Ascending aorta (tissue), 2 donors: ENCODE measurements at regions of chr1 and their contacts with region 1.

Region 1: GRCh38 chr1:31715087-31715872 is 11.5 kb upstream of the COL16A1 start:
- DNase-seq: peak; percentile 80 to 97
- H3K4me3 ChIP-seq: peak overlapping the region; percentile 46 to 64
- H3K27ac ChIP-seq: peak overlapping the region; percentile 96
- H3K4me1 ChIP-seq: peaks cover 17 to 39% of the 10 kb centered on the region in 2 donors
- H3K27me3 ChIP-seq: no peaks in the 10 kb centered on the region
- CTCF ChIP-seq: peak; percentile 85 to 95 (median 90)

Region 2: DNA sequence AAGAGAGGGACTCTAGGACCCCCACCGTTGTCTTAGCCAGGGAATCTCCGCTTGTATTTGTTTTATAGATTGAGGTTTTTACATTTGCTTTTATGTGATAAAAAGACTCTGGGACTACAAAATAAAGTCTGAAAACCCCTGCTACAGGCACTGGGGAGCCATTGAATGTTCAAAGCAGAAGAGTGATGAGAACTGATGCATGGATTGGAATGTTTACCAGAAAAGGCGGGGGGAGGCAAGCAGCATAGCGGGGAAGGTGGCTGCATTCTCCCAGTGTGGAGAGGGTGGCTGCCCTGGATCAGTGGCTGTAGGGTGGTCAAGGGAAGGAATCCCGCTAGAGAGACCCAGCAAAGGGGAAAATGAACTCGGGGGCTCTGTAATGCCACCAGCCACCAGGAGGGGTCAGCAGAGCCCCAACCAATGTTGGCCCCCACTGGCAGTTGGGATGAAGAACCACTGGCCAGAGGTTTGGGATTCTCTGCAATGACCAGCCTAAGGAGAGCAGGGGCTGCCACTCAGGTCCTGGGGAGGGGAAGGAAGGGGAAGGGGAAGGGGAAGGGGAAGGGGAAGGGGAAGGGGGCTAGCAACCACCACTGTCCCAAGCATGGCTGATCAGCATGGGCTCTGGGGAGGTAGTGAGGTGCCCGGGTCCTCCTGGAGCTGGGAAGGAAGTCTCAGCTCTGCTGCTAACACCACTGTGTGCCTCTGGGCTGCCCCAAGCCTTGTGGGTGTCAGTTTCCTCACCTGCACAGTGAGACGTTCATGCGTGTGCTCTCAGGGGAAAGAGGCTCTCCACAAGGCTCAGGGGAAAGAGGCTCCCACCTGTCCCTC is 51.4 kb before region 1 on chr1:
- intact Hi-C with region 1: loop called (anchors 1 kb)
- DNase-seq: peak in 1 of 2 donors; percentile 81
- H3K4me3 ChIP-seq: no peak overlapping the region
- H3K27ac ChIP-seq: no peak overlapping the region
- H3K4me1 ChIP-seq: peaks cover 0 to 3% of the 10 kb centered on the region in 2 donors
- H3K27me3 ChIP-seq: no peaks in the 10 kb centered on the region
- CTCF ChIP-seq: peak; percentile 89 to 98 (median 90)

Region 3: GRCh38 chr1:31705080-31705866 is 10.0 kb before region 1 on chr1:
- intact Hi-C with region 1: loop called (anchors 1 kb)
- DNase-seq: peak in 1 of 2 donors; percentile 84
- H3K4me3 ChIP-seq: peak overlapping the region; percentile 47 to 65
- H3K27ac ChIP-seq: peak overlapping the region; percentile 90 to 94
- H3K4me1 ChIP-seq: peaks cover 8 to 52% of the 10 kb centered on the region in 2 donors
- H3K27me3 ChIP-seq: no peaks in the 10 kb centered on the region
- CTCF ChIP-seq: peak; percentile 35 to 63 (median 46)

Region 4: DNA sequence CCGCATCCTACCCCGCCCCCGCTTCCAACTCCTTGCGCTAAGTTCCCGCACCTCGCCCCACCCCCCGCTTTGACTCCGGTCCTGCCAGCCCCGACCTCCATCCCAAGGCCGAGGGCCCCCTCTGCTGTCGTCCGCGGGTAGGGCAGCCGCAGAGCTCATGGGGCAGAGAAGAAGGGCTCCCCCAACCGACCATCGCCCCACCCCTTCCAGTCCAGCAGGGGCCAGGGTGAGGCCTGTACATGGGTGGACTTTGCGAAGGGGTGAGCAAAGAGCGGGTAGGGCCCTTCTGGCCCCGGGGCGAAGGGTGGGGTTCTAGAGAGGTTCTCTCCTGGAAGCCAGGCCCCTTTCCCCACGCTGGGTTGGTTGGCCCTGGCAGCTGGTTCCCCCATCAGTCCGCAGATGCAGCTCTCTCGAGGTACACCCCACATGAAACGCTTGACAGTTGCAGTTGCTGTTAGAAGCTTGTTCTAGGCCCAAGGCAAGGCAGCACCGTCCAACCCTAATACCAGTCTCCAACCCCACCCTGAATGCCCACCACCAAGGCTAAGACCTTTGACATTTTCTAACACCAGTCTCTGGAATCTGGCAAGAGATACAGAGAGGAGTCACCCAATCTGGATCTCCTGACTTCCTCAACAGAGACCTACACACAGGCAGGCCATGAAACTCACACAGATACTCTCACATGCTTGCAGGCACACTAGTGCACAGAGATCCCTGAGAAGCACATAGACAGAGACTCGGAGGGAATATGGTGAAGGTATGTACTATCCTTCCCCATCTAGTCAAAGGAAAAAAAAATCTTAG is 74.2 kb after region 1 on chr1:
- intact Hi-C with region 1: loop called (anchors 1 kb)
- DNase-seq: peak; percentile 77 to 98
- H3K4me3 ChIP-seq: peak overlapping the region; percentile 62 to 71
- H3K27ac ChIP-seq: peak overlapping the region; percentile 73 to 80
- H3K4me1 ChIP-seq: peaks cover 0 to 7% of the 10 kb centered on the region in 2 donors
- H3K27me3 ChIP-seq: no peaks in the 10 kb centered on the region
- CTCF ChIP-seq: peak; percentile 90 to 99 (median 98)

Region 5: DNA sequence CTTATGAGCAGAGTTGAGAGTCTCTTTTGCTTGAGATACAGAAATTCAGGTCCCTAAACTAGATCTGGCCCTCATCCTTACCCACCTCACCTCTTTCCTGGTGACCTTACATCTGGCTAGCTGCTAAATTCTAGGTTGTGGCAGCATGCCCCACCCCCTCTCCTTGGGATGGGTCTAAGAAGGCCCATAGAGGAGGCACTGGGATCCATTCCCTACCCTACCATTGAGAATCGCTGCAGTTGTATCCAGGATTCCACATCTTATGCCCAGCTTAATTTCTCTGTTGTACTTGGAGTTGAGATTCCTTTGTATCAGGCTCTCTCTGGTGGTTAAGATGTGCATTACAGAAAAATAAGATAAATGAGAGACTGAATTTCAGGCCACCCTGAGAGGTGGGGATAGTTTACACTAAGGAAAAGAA is 348.0 kb after region 1 on chr1:
- intact Hi-C with region 1: loop called (anchors 5 kb)
- DNase-seq: no peak
- H3K4me3 ChIP-seq: no peak overlapping the region
- H3K27ac ChIP-seq: peak overlapping the region; percentile 70 to 91
- H3K4me1 ChIP-seq: peaks cover 3 to 35% of the 10 kb centered on the region in 2 donors
- H3K27me3 ChIP-seq: no peaks in the 10 kb centered on the region
- CTCF ChIP-seq: peak; percentile 49 to 65 (median 65)